OCI-LY7 (cell line): ENCODE measurements at regions of chr3 and their contacts with region 1.

Region 1: DNA sequence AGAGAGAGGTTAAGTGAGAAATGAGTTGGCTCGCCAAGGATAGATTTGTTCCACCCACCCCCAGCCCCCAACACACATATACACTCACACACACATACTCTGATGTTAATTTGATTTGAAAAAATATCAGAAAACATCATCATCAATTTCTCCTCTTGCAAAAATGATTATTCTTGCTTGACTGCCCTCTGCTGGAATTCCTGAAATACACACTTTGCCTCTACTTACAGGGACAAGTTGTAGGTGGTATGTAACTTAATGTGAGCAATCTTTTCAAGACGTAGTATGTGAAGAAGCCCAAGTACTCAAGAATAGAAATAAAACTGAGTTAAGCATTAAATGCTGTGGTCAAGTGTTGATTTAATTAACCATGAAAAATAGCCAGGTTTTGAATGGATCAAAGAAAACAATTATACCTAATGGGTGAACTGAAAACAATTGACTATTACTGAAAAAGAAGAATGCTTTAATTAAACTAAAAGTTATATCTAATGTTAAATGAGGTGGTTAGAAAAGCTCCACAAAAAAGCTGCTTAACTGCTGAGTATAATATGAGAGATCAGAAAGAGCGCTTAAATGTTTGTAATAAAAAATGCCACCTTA is 46.6 kb upstream of the MDFIC2 start:
- DNase-seq: peak; percentile 13
- H3K4me3 ChIP-seq: no peak overlapping the region
- H3K27ac ChIP-seq: no peak overlapping the region
- H3K4me1 ChIP-seq: no peaks in the 10 kb centered on the region
- CTCF ChIP-seq: peak; percentile 82

Region 2: DNA sequence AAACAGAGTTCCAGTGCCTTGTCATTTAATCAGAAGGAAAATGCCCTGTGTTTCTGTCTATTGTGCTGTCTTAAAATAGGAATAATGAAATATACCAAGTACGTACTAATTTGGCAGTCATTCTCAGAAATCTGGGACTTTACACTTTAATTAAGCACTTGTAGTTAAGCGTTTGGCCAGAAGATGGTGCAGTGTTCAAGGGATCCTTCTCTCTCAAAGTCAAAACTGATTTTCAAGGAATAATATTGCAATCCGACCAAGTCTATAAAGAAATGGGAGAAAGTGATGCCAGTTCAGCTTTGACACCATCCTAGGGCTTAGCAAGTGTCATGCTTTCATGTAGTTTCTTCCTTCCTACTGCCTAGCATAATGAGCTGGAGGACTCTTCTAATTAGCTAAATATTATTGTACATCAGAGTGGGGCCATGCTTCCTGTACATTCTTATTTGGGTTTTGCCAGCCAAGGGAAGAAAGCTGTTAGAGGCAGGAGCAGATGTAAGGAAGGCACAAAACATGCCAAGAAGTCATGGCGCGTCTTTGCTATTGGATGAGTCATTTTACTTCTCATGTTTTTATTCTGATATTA is 294.8 kb before region 1 on chr3:
- CTCF ChIA-PET with region 1: no interaction called
- POLR2A ChIA-PET with region 1: no interaction called
- intact Hi-C with region 1: loop called (anchors 10 kb)
- DNase-seq: peak; percentile 9
- H3K4me3 ChIP-seq: no peak overlapping the region
- H3K27ac ChIP-seq: no peak overlapping the region
- H3K4me1 ChIP-seq: no peaks in the 10 kb centered on the region
- CTCF ChIP-seq: peak; percentile 79

Region 3: DNA sequence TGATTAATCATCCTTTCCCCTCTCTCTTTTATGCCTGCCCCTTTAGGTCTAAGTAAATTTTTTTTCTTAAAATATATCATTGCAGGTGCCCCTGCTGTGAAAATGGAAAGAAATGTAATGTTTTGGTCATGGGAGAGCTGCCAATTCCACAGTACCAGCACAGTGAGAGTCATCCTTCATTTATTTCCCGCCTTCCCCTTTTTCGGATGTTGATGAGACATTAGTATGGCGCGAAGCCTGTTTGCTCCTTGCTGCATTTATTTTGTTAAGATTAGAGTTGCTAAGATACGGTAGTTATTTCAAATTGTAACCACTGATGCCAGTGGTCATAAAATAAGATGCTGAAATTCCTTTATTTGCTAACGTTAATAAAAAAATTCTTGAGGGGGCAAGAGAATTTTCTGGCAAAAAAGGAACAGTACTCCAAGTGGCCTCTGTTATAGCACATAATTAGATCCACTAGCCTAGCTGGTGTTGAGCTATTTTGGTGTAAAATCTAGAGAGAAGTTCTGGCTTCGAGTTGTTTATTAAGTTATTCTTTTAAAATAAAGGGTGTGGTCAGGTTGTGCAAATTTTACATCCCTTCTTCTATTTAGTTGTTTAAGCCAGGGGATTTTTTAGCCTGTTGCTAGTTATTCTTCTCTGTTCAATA is 109.4 kb before region 1 on chr3:
- CTCF ChIA-PET with region 1: no interaction called
- POLR2A ChIA-PET with region 1: no interaction called
- intact Hi-C with region 1: loop called (anchors 5 kb)
- DNase-seq: no peak
- H3K4me3 ChIP-seq: no peak overlapping the region
- H3K27ac ChIP-seq: no peak overlapping the region
- H3K4me1 ChIP-seq: no peaks in the 10 kb centered on the region
- CTCF ChIP-seq: no peak